GM12878 (cell line): ENCODE measurements at regions of chr13 and their contacts with region 1.

Region 1: DNA sequence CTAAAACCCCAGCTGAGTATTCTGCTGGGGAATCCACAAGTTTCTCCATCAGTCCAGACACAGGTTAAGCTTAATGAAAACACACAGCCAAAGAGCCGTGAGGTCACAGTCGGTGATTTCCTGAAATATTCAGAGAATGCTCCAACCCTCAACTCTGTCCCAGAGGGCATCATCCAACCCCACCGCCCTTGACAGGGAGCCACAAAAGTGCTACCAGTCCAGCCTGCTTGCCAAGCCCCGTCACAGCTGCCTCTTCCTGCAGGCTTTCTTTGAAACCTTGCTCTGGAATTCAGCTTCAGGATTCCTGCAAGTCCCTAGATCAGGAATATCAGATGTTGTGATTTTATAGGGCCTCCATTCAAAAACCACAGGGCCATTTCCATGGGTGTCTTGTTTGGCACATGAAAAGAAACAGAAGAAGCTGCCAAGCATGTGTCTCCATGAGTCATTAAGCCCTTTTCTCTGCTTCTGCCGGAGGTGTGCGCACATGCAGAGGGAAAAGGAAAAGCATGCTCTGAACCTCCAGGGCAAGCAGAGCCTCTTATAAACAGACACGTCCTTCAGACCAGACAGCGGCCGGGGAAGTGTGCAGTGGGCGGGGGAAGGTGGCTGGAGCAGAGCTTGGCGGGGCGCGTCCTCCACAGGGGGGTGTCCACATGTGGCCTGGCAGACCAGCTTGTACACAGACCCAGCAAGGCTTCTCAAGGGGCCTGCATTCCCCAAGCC is 164.7 kb downstream of the KATNAL1 start:
- DNase-seq: no peak
- ATAC-seq: peak; percentile 46
- H3K4me3 ChIP-seq: no peak overlapping the region
- H3K27ac ChIP-seq: peak overlapping the region; percentile 0; the same call in 1 of the 2 replicates
- H3K4me1 ChIP-seq: peaks cover 60% of the 10 kb centered on the region
- H3K27me3 ChIP-seq: no peaks in the 10 kb centered on the region
- CTCF ChIP-seq: no peak
- EP300 ChIP-seq: no peak
- POLR2A ChIP-seq: no peak
- RAD21 ChIP-seq: no peak

Region 2: GRCh38 chr13:29648760-29649159 is 493.9 kb before region 1 on chr13:
- CTCF ChIA-PET with region 1: no interaction called
- POLR2A ChIA-PET with region 1: no interaction called
- RAD21 ChIA-PET with region 1: no interaction called
- SMC1A ChIA-PET with region 1: no interaction called
- in situ Hi-C with region 1: no loop called
- intact Hi-C with region 1: no loop called
- DNase-seq: no peak
- ATAC-seq: peak; percentile 47; the same call in 2 of the 3 replicates
- H3K4me3 ChIP-seq: no peak overlapping the region
- H3K27ac ChIP-seq: no peak overlapping the region
- H3K4me1 ChIP-seq: no peaks in the 10 kb centered on the region
- H3K27me3 ChIP-seq: no peaks in the 10 kb centered on the region
- CTCF ChIP-seq: no peak
- EP300 ChIP-seq: no peak
- POLR2A ChIP-seq: no peak
- RAD21 ChIP-seq: no peak

Region 3: GRCh38 chr13:30078059-30078458 is 64.6 kb before region 1 on chr13:
- CTCF ChIA-PET with region 1: no interaction called
- POLR2A ChIA-PET with region 1: no interaction called
- RAD21 ChIA-PET with region 1: no interaction called
- SMC1A ChIA-PET with region 1: no interaction called
- in situ Hi-C with region 1: no loop called
- intact Hi-C with region 1: no loop called
- DNase-seq: no peak
- ATAC-seq: peak; percentile 50
- H3K4me3 ChIP-seq: no peak overlapping the region
- H3K27ac ChIP-seq: no peak overlapping the region
- H3K4me1 ChIP-seq: no peaks in the 10 kb centered on the region
- H3K27me3 ChIP-seq: no peaks in the 10 kb centered on the region; a peak in 1 of 4 replicates
- CTCF ChIP-seq: no peak
- EP300 ChIP-seq: no peak
- POLR2A ChIP-seq: no peak
- RAD21 ChIP-seq: no peak

Region 4: DNA sequence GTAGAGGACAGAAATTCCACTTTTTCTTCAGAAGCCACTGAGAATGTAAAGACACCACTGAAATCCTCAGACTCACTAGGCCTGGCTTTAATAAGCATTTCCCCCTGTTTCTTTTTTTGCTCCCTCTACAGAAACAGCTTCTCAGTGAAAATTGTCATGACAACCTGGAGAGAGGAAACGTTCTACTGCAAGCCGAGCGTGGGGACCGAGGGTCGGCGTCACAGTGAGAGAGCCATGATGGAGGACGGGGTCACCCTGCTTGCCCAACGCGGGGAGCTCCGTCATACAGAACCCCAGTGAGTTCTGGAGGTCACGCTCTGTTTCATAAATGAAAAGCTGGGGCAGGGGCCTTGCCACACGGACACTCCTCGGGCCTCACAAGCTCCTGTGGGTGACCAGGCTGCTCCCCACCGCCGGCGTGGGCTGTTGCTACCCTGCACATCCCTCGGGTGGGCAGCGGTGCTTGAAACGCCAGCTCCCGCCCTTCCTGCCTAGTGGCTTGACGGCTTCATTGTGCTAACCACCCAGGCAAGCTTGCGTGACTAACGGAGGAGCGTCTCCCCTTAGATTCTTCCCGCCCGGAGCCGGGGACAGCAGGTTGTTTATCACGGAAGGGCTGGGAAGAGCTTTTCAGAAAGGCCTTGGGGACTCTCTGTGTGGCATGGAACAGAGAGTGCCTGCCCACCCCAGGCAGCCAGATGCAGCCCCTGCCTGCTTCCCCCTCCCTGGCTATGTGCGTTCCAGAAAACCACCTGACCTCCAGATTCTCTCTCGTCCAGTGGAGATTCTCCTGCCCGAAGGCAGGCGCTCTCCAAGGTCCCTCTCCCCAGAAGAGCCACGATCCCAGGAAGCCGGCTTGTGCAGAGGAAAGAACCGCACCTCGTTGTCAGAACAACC is 11.1 kb after region 1 on chr13:
- CTCF ChIA-PET with region 1: interaction called, 44 read pairs
- POLR2A ChIA-PET with region 1: interaction called, 21 read pairs
- RAD21 ChIA-PET with region 1: interaction called, 45 read pairs
- SMC1A ChIA-PET with region 1: interaction called, 91 read pairs
- in situ Hi-C with region 1: no loop called
- intact Hi-C with region 1: loop called (anchors 1 kb)
- DNase-seq: no peak
- ATAC-seq: no peak
- H3K4me3 ChIP-seq: no peak overlapping the region
- H3K27ac ChIP-seq: no peak overlapping the region
- H3K4me1 ChIP-seq: peaks cover 22% of the 10 kb centered on the region
- H3K27me3 ChIP-seq: no peaks in the 10 kb centered on the region
- CTCF ChIP-seq: no peak
- EP300 ChIP-seq: no peak
- POLR2A ChIP-seq: no peak
- RAD21 ChIP-seq: no peak

Region 5: DNA sequence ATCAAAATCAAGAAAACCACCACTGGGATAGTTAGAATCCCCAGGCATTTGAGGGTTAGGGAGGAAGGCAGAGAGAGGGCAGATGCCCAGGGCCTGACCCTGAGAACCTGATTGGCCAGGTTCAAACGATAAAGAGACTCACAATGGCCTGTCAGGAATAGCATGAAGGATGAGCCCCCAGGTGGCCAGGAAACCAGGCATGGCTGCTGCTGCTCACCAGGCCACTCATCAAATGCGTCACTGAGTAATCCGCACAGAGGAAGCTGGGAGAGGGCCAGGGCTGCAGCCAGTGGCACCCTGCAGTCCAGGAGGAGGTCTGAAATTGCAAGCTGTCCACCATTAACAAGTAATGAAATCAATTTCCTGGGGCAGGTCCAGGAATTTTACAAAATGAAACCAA is 53.4 kb after region 1 on chr13:
- CTCF ChIA-PET with region 1: no interaction called
- POLR2A ChIA-PET with region 1: interaction called, 5 read pairs
- RAD21 ChIA-PET with region 1: interaction called, 60 read pairs
- SMC1A ChIA-PET with region 1: interaction called, 32 read pairs
- in situ Hi-C with region 1: no loop called
- intact Hi-C with region 1: loop called (anchors 10 kb)
- DNase-seq: no peak
- ATAC-seq: no peak
- H3K4me3 ChIP-seq: no peak overlapping the region
- H3K27ac ChIP-seq: no peak overlapping the region
- H3K4me1 ChIP-seq: peaks cover 34% of the 10 kb centered on the region
- H3K27me3 ChIP-seq: no peaks in the 10 kb centered on the region
- CTCF ChIP-seq: no peak
- EP300 ChIP-seq: no peak
- POLR2A ChIP-seq: no peak
- RAD21 ChIP-seq: no peak

Region 6: DNA sequence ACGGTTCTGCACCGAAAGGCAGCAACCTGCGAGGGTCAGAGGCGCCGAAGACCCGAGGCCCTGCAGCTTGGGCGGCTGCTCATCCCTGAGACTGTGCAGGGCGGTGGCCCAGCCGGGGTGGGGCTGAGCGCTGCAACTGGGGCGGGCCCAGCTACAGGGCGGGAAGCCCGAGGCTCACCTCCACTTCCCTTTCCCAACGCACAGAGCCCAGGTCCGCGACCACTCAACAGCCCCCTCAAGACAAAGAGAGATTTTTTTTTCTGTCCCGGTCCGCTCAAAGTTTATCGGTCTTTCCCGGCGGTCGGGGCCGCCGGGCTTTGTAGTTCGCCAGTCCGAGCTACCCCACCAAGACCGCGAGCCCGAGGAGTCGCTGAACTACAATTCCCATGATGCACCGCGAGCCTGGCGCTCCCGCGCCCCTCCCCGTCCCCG is 164.1 kb after region 1 on chr13:
- CTCF ChIA-PET with region 1: interaction called, 3 read pairs
- POLR2A ChIA-PET with region 1: interaction called, 8 read pairs
- RAD21 ChIA-PET with region 1: interaction called, 6 read pairs
- SMC1A ChIA-PET with region 1: interaction called, 6 read pairs
- in situ Hi-C with region 1: no loop called
- intact Hi-C with region 1: loop called (anchors 5 kb)
- DNase-seq: peak; percentile 66
- ATAC-seq: peak; percentile 89
- H3K4me3 ChIP-seq: peak overlapping the region; percentile 67
- H3K27ac ChIP-seq: peak overlapping the region; percentile 74
- H3K4me1 ChIP-seq: peaks cover 18% of the 10 kb centered on the region
- H3K27me3 ChIP-seq: no peaks in the 10 kb centered on the region
- CTCF ChIP-seq: no peak
- EP300 ChIP-seq: no peak
- POLR2A ChIP-seq: peak; percentile 71
- RAD21 ChIP-seq: no peak

Region 7: GRCh38 chr13:30617315-30618185 is 474.9 kb after region 1 on chr13 and contains the start of gene USPL1:
- CTCF ChIA-PET with region 1: no interaction called
- POLR2A ChIA-PET with region 1: no interaction called
- RAD21 ChIA-PET with region 1: no interaction called
- SMC1A ChIA-PET with region 1: no interaction called
- in situ Hi-C with region 1: no loop called
- intact Hi-C with region 1: loop called (anchors 1 kb)
- DNase-seq: peak; percentile 96
- ATAC-seq: peak; percentile 91
- H3K4me3 ChIP-seq: peak within 1 kb of the TSS; percentile 91
- H3K27ac ChIP-seq: peak within 1 kb of the TSS; percentile 93
- H3K4me1 ChIP-seq: peaks cover 8% of the 10 kb centered on the region
- H3K27me3 ChIP-seq: no peaks in the 10 kb centered on the region
- CTCF ChIP-seq: peak in 1 of 3 experiments; percentile 6; a peak in 1 of 6 replicates
- EP300 ChIP-seq: peak; percentile 84 to 95
- POLR2A ChIP-seq: peak; percentile 93
- RAD21 ChIP-seq: peak; percentile 17; the same call in 1 of the 2 replicates
- polyA plus RNA-seq, gene USPL1: 7.9 to 8.0 TPM